ENCODE measurements at regions of chr15 and their contacts with region 1.

Region 1: DNA sequence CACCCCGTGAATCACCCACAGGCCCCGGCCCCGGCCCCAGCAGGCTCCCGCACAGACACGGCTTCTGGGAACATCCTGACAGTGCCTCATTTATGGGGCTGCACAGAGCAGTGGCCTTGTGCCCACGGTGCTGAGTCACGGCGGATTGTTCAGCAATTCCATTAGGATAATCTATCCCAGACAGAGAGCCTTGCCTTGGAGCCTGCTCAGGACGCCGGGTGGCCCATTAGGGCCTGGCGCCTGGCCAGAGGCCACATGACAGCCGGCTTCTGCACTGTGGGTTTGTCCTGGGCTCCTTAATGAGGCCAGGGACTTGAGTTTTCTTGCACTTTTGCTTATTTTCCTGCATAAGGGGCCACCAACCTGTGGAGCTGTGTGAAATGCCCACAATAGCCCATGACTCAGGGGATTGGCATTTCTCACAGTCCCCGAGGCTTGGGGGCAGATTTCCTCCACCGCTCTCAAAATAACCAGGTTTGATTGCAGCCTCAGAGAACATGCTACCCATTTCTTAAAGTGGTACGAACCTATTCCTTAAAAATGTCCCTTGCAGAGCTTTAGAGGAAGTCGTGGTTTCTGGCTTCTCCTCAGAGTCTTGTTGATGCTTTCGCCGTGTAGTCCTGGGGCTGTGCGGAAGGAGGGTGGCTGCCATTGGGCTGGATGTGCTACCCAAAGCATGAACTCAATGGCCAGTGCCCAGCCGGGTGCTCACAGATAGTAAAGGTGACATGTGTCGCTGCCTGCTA is 19.0 kb downstream of the SYNM start:
- DNase-seq: peak; percentile 46
- H3K4me3 ChIP-seq: no peak overlapping the region
- H3K27ac ChIP-seq: peak overlapping the region; percentile 69 to 77
- H3K4me1 ChIP-seq: peaks cover 7% of the 10 kb centered on the region
- H3K27me3 ChIP-seq: no peaks in the 10 kb centered on the region
- CTCF ChIP-seq: no peak
- POLR2A ChIP-seq: no peak

Region 2: GRCh38 chr15:98823012-98823458 is 300.8 kb before region 1 on chr15:
- intact Hi-C with region 1: no loop called
- DNase-seq: no peak
- H3K4me3 ChIP-seq: no peak overlapping the region
- H3K27ac ChIP-seq: peak overlapping the region in 1 of 2 donors; percentile 11
- H3K4me1 ChIP-seq: no peaks in the 10 kb centered on the region
- H3K27me3 ChIP-seq: no peaks in the 10 kb centered on the region
- CTCF ChIP-seq: no peak
- POLR2A ChIP-seq: no peak

Region 3: DNA sequence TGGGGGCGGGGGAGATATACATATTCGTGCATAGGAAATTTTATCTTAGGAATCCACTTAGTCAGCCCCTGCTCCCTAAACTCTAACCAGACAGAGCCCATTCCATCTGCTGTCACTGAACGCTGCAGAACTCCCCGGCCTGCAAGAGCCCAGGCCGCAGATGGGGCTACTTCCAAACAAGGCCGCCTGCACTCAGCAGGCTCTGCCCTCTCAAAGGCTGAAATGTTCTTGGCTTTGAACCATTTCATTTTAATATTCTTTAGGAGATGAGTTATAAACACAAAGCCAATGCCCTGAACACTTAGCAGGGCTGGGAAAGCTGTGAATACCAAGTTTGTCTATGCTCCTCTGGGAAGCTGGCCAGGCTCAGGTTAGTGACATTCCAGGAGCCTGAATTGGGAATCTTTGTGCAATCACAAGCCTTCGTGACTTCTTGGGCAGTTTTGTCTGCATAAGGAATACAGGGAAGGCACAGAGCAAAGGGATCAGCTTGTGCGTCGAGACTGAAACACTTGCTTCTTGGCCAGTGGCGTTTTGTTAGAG is 46.0 kb after region 1 on chr15:
- intact Hi-C with region 1: loop called (anchors 5 kb)
- DNase-seq: peak; percentile 39
- H3K4me3 ChIP-seq: no peak overlapping the region
- H3K27ac ChIP-seq: peak overlapping the region; percentile 76 to 81
- H3K4me1 ChIP-seq: no peaks in the 10 kb centered on the region
- H3K27me3 ChIP-seq: no peaks in the 10 kb centered on the region
- CTCF ChIP-seq: no peak
- POLR2A ChIP-seq: no peak

Region 4: GRCh38 chr15:99213187-99213811 is 89.4 kb after region 1 on chr15:
- intact Hi-C with region 1: loop called (anchors 5 kb)
- DNase-seq: peak; percentile 73
- H3K4me3 ChIP-seq: no peak overlapping the region
- H3K27ac ChIP-seq: peak overlapping the region; percentile 37 to 44
- H3K4me1 ChIP-seq: no peaks in the 10 kb centered on the region
- H3K27me3 ChIP-seq: no peaks in the 10 kb centered on the region
- CTCF ChIP-seq: peak; percentile 31 to 94 (median 85)
- POLR2A ChIP-seq: no peak